ENCODE measurements at regions of chr17 and their contacts with region 1.

Region 1: GRCh38 chr17:67376737-67377487 is at the start of gene PITPNC1:
- DNase-seq: peak; percentile 85
- H3K4me3 ChIP-seq: peak within 1 kb of the TSS; percentile 83 to 94 (median 85)
- H3K27ac ChIP-seq: peak within 1 kb of the TSS; percentile 85 to 98 (median 89)
- H3K4me1 ChIP-seq: peaks cover 5 to 20% of the 10 kb centered on the region in 2 donors
- H3K27me3 ChIP-seq: no peaks in the 10 kb centered on the region
- CTCF ChIP-seq: peak in 1 of 6 experiments; percentile 5
- POLR2A ChIP-seq: peak; percentile 27 to 89
- total RNA-seq, gene PITPNC1: 3.6 to 14.2 (median 7.3) TPM

Region 2: DNA sequence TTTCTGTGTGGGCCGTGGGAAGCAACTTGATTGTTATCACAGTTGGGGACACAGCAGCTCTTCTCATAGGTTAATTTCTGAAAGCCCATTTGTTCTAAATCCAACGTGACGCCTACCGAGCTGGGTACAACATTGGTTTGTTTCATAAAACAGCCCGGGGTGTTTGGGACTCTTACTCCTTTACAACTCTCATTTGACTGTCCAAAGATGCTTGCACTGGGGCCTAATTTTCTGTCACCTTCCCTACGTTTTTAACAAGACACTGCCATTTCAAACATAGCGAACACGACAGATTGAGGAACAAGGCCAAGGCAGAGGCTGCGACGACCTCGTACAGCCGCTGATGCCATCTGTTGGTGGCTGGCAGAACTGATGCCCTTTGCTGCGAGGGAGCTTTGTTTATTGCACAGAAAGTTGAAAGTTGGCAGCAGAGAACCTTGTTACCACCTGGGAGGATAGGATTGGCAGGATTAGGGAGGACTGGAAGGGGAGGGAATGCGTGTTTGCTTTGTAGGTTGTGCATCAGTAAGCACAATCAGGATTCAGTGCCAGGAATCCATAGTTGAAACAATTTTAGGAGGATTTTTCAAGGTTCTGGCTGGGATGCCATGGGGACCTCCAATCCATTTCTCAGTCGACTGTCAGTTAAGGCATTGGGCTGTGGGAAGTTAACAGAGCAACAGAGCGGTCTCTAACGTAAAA is 98.5 kb after region 1 on chr17:
- intact Hi-C with region 1: loop called (anchors 5 kb)
- DNase-seq: peak; percentile 87 to 89
- H3K4me3 ChIP-seq: no peak overlapping the region
- H3K27ac ChIP-seq: peak overlapping the region; percentile 5 to 75 (median 56)
- H3K4me1 ChIP-seq: peaks cover 4 to 37% of the 10 kb centered on the region in 2 donors
- H3K27me3 ChIP-seq: no peaks in the 10 kb centered on the region
- CTCF ChIP-seq: peak; percentile 72 to 97 (median 93)
- POLR2A ChIP-seq: peak in 1 of 2 donors; percentile 10

Region 3: DNA sequence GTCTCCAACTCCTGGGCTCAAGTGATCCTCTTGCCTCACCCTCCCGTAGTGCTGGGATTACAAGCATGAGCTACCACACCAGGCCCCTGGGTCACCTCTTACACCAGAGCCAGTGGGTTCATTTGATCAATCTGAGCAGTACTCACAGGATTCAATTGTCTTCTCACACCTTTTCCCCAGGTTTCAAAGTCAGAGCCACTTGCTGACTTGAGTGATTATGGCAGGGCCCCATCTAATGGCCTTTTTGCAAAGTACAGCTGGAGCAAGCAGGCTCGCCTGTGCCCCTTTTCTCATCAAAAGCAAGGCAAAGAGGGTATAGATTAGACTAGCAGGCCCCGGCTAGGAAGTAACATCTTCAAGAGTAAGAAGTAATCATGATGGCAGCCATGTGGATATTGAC is 226.0 kb after region 1 on chr17:
- intact Hi-C with region 1: loop called (anchors 10 kb)
- DNase-seq: peak; percentile 27 to 45
- H3K4me3 ChIP-seq: no peak overlapping the region
- H3K27ac ChIP-seq: no peak overlapping the region
- H3K4me1 ChIP-seq: peaks cover 14 to 32% of the 10 kb centered on the region in 2 donors
- H3K27me3 ChIP-seq: no peaks in the 10 kb centered on the region
- CTCF ChIP-seq: peak in 4 of 6 experiments; percentile 48 to 66 (median 55)
- POLR2A ChIP-seq: no peak

Region 4: DNA sequence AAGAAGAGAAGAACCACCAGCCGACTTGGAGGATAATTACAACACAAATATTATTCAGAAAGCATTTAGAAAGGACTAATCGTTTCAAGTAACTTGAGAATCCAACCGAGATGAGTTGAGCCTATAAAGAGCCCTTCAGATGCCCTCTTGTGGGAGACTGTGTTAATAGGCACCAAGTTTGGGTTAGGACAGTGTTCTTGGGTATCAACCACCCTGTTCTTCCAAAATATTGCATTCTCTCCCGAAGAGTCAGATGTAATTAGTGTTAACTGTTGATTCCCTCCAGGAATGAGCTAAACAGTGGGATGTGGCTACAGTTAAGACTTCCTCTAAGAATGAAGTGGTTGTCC is 253.0 kb after region 1 on chr17:
- intact Hi-C with region 1: loop called (anchors 5 kb)
- DNase-seq: no peak
- H3K4me3 ChIP-seq: no peak overlapping the region
- H3K27ac ChIP-seq: peak overlapping the region; percentile 78 to 89 (median 84)
- H3K4me1 ChIP-seq: peaks cover 11 to 37% of the 10 kb centered on the region in 2 donors
- H3K27me3 ChIP-seq: no peaks in the 10 kb centered on the region
- CTCF ChIP-seq: peak in 4 of 6 experiments; percentile 33 to 46 (median 38)
- POLR2A ChIP-seq: no peak

Region 5: DNA sequence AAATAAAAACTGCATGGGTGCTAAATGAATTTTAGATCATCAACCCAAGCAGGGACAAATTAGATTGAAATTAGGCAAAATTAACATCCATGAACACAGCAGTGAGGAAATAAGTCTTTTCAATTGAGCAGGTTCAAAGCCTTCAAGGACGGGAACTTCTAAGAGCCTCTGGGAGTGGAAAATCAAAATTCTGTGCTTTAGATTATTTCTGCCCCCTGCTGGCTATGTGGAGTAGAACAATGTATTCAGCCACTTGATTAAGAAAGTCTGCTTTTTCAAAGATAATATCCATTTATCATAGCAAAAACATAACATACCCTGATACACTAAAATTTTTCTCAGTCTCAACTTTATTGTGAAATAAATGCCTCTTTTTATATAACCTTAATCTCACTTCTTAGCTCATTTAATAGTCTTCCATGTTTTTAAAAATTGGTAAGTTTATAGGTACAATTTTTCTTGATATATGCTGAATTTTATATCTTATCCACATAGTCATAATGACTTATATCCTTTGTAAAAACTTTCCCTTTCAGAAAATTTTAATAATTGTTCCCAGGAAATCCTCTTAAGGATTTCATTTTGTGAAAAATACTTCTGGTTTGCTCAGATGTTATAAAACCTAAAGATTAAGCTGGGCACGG is 312.7 kb after region 1 on chr17:
- intact Hi-C with region 1: loop called (anchors 2 kb)
- DNase-seq: peak; percentile 45 to 48
- H3K4me3 ChIP-seq: no peak overlapping the region
- H3K27ac ChIP-seq: no peak overlapping the region
- H3K4me1 ChIP-seq: no peaks in the 10 kb centered on the region
- H3K27me3 ChIP-seq: no peaks in the 10 kb centered on the region
- CTCF ChIP-seq: peak; percentile 55 to 89 (median 80)
- POLR2A ChIP-seq: no peak

Region 6: DNA sequence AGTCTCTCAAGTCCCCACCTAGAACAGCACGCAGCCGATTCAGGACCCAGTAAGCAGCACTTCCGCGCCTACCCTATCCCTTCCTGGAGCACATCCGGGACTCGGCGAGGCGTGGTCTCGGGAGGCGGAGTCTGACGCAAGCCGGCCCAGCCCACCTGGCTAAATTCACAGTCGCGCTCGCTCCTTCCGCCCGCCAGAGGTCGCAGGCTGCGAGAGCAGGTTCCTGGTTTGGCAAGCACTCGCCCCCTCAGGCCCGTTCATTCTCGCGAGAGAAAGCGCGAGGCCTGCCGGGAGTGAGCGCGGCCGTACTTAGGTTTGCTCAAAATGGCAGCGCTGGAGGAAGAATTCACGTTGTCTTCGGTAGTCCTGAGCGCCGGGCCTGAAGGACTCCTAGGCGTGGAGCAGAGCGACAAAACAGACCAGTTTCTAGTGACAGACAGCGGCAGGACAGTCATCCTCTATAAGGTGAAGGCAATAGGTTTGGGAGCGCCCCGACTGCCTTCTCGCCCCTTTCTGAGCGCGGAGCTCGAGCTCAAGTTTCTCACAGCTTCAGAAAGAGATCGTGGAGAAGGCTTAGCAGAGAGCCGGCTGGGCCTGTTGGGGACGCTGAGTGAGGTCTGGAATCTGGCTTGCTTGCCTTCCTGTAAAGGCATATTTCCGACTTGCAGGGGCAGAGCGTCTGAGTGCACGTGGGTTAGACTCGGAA is 340.9 kb after region 1 on chr17 and contains the start of gene NOL11:
- intact Hi-C with region 1: loop called (anchors 10 kb)
- DNase-seq: peak; percentile 98 to 99
- H3K4me3 ChIP-seq: peak within 1 kb of the TSS; percentile 38 to 93 (median 86)
- H3K27ac ChIP-seq: peak within 1 kb of the TSS; percentile 67 to 84 (median 80)
- H3K4me1 ChIP-seq: peaks cover 9 to 10% of the 10 kb centered on the region in 2 donors
- H3K27me3 ChIP-seq: no peaks in the 10 kb centered on the region
- CTCF ChIP-seq: peak; percentile 60 to 99 (median 92)
- POLR2A ChIP-seq: peak in 1 of 2 donors; percentile 94
- total RNA-seq, gene NOL11: 25.7 to 43.7 (median 34.8) TPM

Measured in thyroid gland (tissue), 4 donors.